GM12878 (cell line): ENCODE measurements at regions of chr5 and their contacts with region 1.

Region 1: DNA sequence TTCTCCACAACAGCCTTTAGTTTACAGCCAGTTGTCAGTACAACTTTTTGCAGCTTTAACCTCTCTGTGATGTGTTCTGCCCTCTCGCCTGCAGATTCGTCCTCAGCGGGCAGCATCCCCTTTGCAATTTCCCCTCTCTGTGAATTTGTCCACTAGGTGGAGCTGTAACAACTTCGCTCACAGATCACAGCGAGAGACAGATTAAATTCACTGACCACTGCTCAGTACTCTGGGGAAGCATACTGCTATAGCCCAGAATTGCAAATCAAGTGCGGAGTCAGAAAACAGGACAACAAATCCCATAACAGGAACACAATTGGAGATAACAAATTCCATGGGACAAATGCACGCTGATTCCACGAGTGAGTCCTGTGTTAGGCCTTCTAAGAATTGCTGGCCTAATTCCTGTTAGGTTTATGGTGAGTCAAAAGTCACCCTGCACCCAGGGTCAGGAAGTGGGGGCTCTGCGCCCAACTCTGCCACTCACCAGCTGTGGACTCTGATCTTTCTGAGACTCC is 2124.9 kb downstream of the MAT2B start:
- DNase-seq: peak; percentile 2
- ATAC-seq: peak; percentile 98
- H3K4me3 ChIP-seq: no peak overlapping the region
- H3K27ac ChIP-seq: no peak overlapping the region
- H3K4me1 ChIP-seq: no peaks in the 10 kb centered on the region
- H3K27me3 ChIP-seq: no peaks in the 10 kb centered on the region
- CTCF ChIP-seq: peak; percentile 65 to 73 (median 67)
- EP300 ChIP-seq: no peak
- POLR2A ChIP-seq: no peak
- RAD21 ChIP-seq: peak; percentile 68

Region 2: DNA sequence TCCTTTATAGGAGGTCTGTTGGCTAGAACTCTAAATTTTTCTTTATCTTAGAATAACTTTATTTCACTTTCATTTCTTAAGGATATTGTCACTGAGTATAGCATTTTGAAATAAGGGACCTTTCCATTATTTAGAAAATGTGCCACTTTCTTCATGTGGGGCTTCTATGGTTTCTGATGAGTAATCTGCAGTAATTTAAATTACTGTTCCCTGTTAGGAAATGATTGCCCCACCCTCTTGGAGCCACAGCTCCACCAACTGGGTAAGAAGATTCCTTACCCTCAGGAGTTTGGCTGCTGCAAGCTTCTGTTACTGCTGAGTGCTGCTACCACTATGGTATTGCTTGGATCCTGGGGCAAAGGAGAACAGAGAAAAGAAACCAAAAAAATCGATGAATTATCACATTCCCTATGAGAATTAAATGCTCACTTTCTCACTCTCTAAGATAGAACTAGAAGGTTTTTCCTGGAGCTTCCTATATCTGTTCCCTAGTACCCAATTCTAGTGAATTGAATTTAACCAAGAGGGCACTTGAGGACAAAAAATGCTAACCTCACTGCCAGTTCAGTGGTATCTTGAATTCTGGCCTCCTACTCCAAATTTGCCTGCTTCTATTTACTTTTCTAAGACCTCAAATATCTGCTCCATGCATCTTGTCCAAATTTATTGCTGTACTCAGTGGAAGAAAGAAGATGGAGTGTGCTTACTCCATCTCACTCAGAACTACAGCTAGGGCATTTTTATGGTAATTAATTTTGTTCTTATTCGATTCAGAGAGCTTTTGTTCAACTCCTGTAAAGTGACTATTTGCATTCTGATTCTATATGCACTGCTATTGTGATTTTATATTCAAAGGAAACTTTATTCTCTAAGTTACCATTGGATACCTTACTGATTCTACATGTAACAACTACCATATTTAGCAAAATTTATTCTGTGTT is 13.6 kb before region 1 on chr5:
- CTCF ChIA-PET with region 1: interaction called, 38 read pairs
- POLR2A ChIA-PET with region 1: no interaction called
- RAD21 ChIA-PET with region 1: no interaction called
- SMC1A ChIA-PET with region 1: interaction called, 8 read pairs
- in situ Hi-C with region 1: no loop called
- intact Hi-C with region 1: no loop called
- DNase-seq: no peak
- ATAC-seq: no peak
- H3K4me3 ChIP-seq: no peak overlapping the region
- H3K27ac ChIP-seq: no peak overlapping the region
- H3K4me1 ChIP-seq: no peaks in the 10 kb centered on the region
- H3K27me3 ChIP-seq: no peaks in the 10 kb centered on the region
- CTCF ChIP-seq: no peak
- EP300 ChIP-seq: no peak
- POLR2A ChIP-seq: no peak
- RAD21 ChIP-seq: no peak

Region 3: GRCh38 chr5:165642366-165642765 is 12.0 kb after region 1 on chr5:
- CTCF ChIA-PET with region 1: interaction called, 11 read pairs
- POLR2A ChIA-PET with region 1: no interaction called
- RAD21 ChIA-PET with region 1: no interaction called
- SMC1A ChIA-PET with region 1: interaction called, 4 read pairs
- in situ Hi-C with region 1: no loop called
- intact Hi-C with region 1: no loop called
- DNase-seq: no peak
- ATAC-seq: no peak
- H3K4me3 ChIP-seq: no peak overlapping the region
- H3K27ac ChIP-seq: no peak overlapping the region
- H3K4me1 ChIP-seq: no peaks in the 10 kb centered on the region
- H3K27me3 ChIP-seq: no peaks in the 10 kb centered on the region
- CTCF ChIP-seq: no peak
- EP300 ChIP-seq: no peak
- POLR2A ChIP-seq: no peak
- RAD21 ChIP-seq: no peak

Region 4: GRCh38 chr5:165881259-165881658 is 250.9 kb after region 1 on chr5:
- CTCF ChIA-PET with region 1: interaction called, 3 read pairs
- POLR2A ChIA-PET with region 1: no interaction called
- RAD21 ChIA-PET with region 1: interaction called, 3 read pairs
- SMC1A ChIA-PET with region 1: interaction called, 3 read pairs
- in situ Hi-C with region 1: no loop called
- intact Hi-C with region 1: loop called (anchors 5 kb)
- DNase-seq: no peak
- ATAC-seq: peak; percentile 56
- H3K4me3 ChIP-seq: no peak overlapping the region
- H3K27ac ChIP-seq: no peak overlapping the region
- H3K4me1 ChIP-seq: no peaks in the 10 kb centered on the region
- H3K27me3 ChIP-seq: no peaks in the 10 kb centered on the region
- CTCF ChIP-seq: no peak; a peak in 1 of 6 replicates
- EP300 ChIP-seq: no peak
- POLR2A ChIP-seq: no peak
- RAD21 ChIP-seq: no peak

Region 5: DNA sequence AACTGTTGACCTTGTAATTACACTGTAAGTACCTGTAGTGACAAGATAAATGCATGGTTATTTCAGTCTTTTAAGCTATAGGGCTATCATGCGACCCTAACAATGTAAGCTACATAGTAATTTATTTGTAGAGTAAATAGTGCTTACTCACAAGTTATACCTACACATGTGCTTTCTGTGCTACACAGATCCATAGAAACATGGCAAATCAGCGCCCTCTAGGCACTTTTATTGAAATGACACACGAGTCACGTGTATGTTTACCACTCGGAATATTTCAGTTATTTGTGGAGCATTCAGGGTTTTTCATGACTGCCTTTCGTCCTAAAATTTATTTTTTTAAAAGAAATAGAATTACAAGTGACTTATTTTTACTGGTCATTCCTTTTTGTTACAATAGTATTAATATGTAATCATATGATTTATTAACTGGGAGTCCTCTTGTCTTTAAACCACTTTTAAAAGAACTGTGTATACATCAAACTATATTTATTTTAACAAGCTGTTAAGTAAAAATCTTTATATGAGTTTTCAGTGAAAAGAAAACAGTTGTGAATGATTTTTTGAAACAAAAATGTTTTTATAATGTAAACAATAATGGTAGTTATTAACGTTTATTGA is 1418.8 kb after region 1 on chr5:
- CTCF ChIA-PET with region 1: interaction called, 18 read pairs
- POLR2A ChIA-PET with region 1: no interaction called
- RAD21 ChIA-PET with region 1: no interaction called
- SMC1A ChIA-PET with region 1: no interaction called
- in situ Hi-C with region 1: no loop called
- intact Hi-C with region 1: loop called (anchors 2 kb)
- DNase-seq: no peak
- ATAC-seq: peak; percentile 92
- H3K4me3 ChIP-seq: no peak overlapping the region
- H3K27ac ChIP-seq: no peak overlapping the region
- H3K4me1 ChIP-seq: no peaks in the 10 kb centered on the region
- H3K27me3 ChIP-seq: no peaks in the 10 kb centered on the region
- CTCF ChIP-seq: peak; percentile 44 to 62 (median 57)
- EP300 ChIP-seq: no peak
- POLR2A ChIP-seq: no peak
- RAD21 ChIP-seq: peak; percentile 51